GM18951 (cell line): ENCODE measurements at regions of chr12 and their contacts with region 1.

Region 1: GRCh38 chr12:7678738-7679137 is 13.0 kb upstream of the APOBEC1 start:
- POLR2A ChIP-seq: no peak

Region 2: GRCh38 chr12:7806863-7807487 is 128.2 kb after region 1 on chr12:
- in situ Hi-C with region 1: loop called (anchors 10 kb)
- POLR2A ChIP-seq: no peak